Heart left ventricle (tissue), 16 donors: ENCODE measurements at regions of chr12 and their contacts with region 1.

Region 1: DNA sequence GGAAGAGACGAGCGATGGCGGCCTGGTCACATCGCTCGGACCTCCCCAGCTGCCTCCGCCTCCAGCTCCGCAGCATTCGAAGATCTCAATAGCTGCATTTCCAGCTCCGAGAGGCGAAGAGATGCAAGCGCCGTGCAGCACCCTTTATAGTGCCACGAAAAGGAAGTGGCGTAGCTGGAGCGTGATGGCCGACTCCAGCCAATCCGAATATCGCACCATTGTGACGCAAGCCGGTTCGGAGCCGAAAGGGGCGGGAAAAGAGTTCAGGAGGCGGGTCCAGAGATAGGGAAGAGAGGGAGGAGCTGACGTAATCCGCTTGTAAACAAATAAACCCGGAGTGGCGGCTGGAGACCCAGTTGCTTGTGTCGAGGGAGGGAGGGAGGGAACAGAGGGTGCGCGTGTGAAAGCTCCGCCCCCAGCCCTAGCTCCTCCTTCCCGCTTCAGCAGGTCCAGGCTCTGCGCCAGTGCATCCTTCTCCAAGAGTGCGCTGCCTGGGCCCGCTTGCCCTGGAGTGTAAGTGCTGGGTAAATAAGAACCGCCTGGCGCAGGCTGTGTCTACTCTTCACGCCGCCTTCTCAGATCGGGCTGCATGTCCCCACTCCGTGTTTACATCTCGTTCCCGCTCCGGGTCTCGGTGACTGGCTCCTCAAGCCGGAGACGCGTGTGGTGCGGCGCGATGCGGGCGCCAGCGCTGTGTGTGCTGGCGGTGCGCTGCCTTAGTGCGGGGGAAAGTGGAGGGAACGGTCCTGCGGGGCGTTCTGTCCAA is at the start of gene BTG1:
- DNase-seq: peak; percentile 98 to 99 (median 99)
- ATAC-seq: peak; percentile 89 to 93 (median 90)
- H3K4me3 ChIP-seq: peak within 1 kb of the TSS; percentile 76 to 96 (median 92)
- H3K27ac ChIP-seq: peak within 1 kb of the TSS; percentile 92 to 100 (median 98)
- H3K4me1 ChIP-seq: peaks cover 0 to 35% (median 4%) of the 10 kb centered on the region in 12 donors
- H3K27me3 ChIP-seq: no peaks in the 10 kb centered on the region
- CTCF ChIP-seq: peak in 1 of 12 donors; percentile 7
- POLR2A ChIP-seq: peak; percentile 95 to 99
- total RNA-seq, gene BTG1: 20.5 to 120 (median 58.3) TPM

Region 2: GRCh38 chr12:91577586-91578539 is 568.1 kb before region 1 on chr12:
- intact Hi-C with region 1: loop called in 6 of 10 experiments (anchors 2 to 10 kb)
- DNase-seq: no peak
- ATAC-seq: peak in 2 of 4 donors; percentile 45 to 50
- H3K4me3 ChIP-seq: peak overlapping the region in 9 of 12 donors; percentile 17 to 37 (median 26)
- H3K27ac ChIP-seq: peak overlapping the region in 3 of 12 donors; percentile 10 to 45 (median 35)
- H3K4me1 ChIP-seq: peaks cover 0 to 15% (median 7%) of the 10 kb centered on the region in 12 donors
- H3K27me3 ChIP-seq: no peaks in the 10 kb centered on the region
- CTCF ChIP-seq: peak; percentile 62 to 82 (median 72)
- POLR2A ChIP-seq: no peak

Region 3: GRCh38 chr12:91883781-91884180 is 262.1 kb before region 1 on chr12:
- intact Hi-C with region 1: loop called in 1 of 10 experiments (anchors 10 kb)
- DNase-seq: no peak
- ATAC-seq: no peak
- H3K4me3 ChIP-seq: no peak overlapping the region
- H3K27ac ChIP-seq: no peak overlapping the region
- H3K4me1 ChIP-seq: no peaks in the 10 kb centered on the region
- H3K27me3 ChIP-seq: no peaks in the 10 kb centered on the region
- CTCF ChIP-seq: no peak
- POLR2A ChIP-seq: no peak

Region 4: DNA sequence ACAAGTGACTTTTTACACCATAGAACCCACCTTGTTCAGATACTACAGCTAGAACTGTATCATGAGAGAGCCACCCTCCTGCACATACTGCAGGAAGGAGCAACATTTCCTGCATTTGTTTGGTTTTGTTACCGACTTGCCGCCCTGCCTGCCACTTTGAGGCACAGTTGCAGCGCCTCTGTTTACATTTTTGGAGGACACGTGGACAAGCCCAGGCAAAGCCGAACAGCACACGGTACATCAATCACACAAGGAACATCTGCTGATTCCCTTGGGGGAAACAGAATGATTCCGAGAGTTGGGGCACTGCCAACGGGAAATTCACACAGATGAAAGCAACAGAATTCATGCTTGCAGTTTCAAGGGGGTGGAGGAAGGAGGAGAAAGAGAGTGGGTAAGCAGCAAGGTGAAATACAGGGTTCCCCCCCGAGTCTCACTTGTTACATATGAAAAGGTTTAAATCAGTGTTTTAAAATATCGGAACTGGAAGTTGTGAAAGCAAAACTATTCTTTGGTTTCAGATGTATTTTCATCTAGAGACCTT is 111.0 kb before region 1 on chr12:
- intact Hi-C with region 1: loop called in 1 of 10 experiments (anchors 5 kb)
- DNase-seq: peak; percentile 28 to 62 (median 47)
- ATAC-seq: peak in 3 of 4 donors; percentile 42 to 69 (median 66)
- H3K4me3 ChIP-seq: peak overlapping the region in 8 of 12 donors; percentile 4 to 48 (median 30)
- H3K27ac ChIP-seq: peak overlapping the region in 8 of 12 donors; percentile 2 to 78 (median 24)
- H3K4me1 ChIP-seq: peaks cover 0 to 74% (median 23%) of the 10 kb centered on the region in 12 donors
- H3K27me3 ChIP-seq: no peaks in the 10 kb centered on the region
- CTCF ChIP-seq: no peak
- POLR2A ChIP-seq: no peak

Region 5: GRCh38 chr12:92244036-92244435 is 98.1 kb after region 1 on chr12:
- intact Hi-C with region 1: loop called in 6 of 10 experiments (anchors 1 to 10 kb)
- DNase-seq: peak in 2 of 5 donors; percentile 32 to 61
- ATAC-seq: peak; percentile 95 to 98 (median 96)
- H3K4me3 ChIP-seq: peak overlapping the region in 1 of 12 donors; percentile 23
- H3K27ac ChIP-seq: peak overlapping the region; percentile 48 to 78 (median 68)
- H3K4me1 ChIP-seq: peaks cover 5 to 25% (median 15%) of the 10 kb centered on the region in 12 donors
- H3K27me3 ChIP-seq: no peaks in the 10 kb centered on the region
- CTCF ChIP-seq: peak in 8 of 12 donors; percentile 22 to 54 (median 32)
- POLR2A ChIP-seq: no peak

Region 6: DNA sequence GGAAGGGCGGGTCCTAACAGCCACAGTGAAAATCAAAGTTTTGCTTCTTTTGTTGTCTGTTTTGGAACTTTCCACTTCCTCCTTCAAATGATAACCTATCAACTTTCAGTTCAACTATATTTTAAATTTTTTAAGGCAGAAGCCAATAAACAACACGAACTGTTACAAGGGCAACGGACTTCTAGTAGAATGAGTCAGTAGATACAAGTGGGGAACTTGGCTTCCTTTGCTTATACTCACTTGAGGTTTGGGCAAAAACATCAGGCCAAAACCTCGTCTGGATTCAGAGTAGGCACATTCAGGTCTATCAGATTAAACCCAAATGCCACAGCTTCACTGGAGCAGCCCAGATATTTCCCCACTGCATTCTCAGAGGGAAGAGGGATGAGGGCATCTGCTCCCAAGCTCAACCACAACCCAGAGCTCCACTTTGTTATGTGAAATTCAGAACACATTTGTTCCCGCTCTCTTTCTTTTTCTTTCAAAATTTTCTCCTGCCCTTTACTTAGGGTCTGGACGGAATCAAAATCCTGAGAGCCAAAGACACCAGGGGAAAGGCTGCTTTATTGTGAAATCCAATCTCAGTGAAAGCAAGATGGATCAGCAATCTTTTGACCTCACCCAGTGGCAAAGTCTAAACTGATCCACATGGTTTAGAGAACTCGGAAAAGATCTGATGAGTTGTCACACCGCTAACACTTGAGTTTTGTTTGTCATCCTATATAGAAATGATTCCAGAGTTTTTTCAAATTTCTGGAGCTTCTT is 152.2 kb after region 1 on chr12:
- intact Hi-C with region 1: no loop called
- DNase-seq: no peak
- ATAC-seq: peak; percentile 37 to 84 (median 68)
- H3K4me3 ChIP-seq: no peak overlapping the region
- H3K27ac ChIP-seq: peak overlapping the region in 11 of 12 donors; percentile 17 to 84 (median 47)
- H3K4me1 ChIP-seq: peaks cover 0 to 29% (median 3%) of the 10 kb centered on the region in 12 donors
- H3K27me3 ChIP-seq: no peaks in the 10 kb centered on the region
- CTCF ChIP-seq: no peak
- POLR2A ChIP-seq: no peak

Region 7: DNA sequence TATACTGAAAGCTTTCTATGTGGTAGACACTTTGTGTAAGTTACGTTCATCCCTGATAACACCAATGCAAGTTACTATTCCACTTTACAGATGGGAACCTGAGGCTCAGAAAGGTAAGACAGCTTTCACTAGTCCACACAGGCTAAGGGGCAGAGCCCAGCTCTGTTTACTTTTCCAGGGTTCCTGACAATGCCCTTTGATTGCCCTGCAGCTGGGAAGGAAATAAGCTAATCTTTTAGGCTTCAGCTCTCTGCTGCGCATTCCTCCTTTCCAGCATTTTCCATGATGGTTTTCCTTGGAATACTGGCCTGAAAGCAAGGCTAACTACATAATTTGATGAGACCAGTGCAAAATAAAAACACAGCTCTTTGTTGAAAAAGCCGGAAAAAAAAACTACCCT is 185.5 kb after region 1 on chr12:
- intact Hi-C with region 1: no loop called
- DNase-seq: no peak
- ATAC-seq: no peak
- H3K4me3 ChIP-seq: no peak overlapping the region
- H3K27ac ChIP-seq: no peak overlapping the region
- H3K4me1 ChIP-seq: peaks cover 0 to 12% (median 0%) of the 10 kb centered on the region in 12 donors
- H3K27me3 ChIP-seq: no peaks in the 10 kb centered on the region
- CTCF ChIP-seq: no peak
- POLR2A ChIP-seq: no peak

Region 8: DNA sequence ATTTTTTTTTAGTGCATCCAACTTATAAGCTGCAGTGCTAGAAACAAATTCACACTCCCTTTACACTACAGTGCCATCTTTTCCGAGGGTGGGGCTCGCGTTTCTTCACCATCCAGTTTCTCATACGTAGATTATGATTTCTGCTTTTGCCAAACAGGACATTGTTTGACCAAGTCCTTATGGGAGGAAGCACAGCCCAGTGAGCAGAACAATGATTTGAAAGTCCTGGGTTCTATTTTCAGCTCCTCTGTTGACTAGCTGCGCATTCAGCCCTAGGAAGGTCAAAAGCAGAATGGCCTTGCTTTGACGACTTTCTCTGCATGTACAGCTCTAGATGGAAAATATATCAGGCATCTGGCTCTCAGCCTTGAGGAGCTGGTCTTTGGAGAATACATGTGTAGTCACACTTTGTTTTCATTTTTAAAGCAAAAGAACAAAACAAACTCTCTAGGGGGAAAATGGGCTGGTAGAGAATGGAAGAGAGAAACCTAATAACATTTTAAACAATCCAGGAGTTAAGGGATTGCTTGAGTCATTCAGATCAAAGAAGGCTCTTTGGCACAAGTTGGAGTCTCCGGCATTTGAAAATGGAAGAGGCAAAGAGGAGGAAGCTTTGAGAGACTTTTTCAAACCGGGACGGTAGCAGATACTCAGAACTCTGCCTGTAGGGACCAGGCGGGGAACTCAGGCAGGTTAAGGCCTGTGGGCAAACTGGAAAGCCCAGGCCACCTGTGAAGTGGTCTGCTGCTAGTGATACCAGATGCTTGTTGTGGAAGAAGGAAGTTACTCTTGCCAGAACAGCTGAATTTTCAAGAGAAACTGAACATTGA is 299.6 kb after region 1 on chr12:
- intact Hi-C with region 1: loop called in 1 of 10 experiments (anchors 10 kb)
- DNase-seq: peak in 4 of 5 donors; percentile 34 to 57 (median 52)
- ATAC-seq: peak; percentile 80 to 94 (median 84)
- H3K4me3 ChIP-seq: no peak overlapping the region
- H3K27ac ChIP-seq: peak overlapping the region; percentile 53 to 89 (median 76)
- H3K4me1 ChIP-seq: peaks cover 0 to 44% (median 25%) of the 10 kb centered on the region in 12 donors
- H3K27me3 ChIP-seq: no peaks in the 10 kb centered on the region
- CTCF ChIP-seq: no peak
- POLR2A ChIP-seq: no peak

Region 9: DNA sequence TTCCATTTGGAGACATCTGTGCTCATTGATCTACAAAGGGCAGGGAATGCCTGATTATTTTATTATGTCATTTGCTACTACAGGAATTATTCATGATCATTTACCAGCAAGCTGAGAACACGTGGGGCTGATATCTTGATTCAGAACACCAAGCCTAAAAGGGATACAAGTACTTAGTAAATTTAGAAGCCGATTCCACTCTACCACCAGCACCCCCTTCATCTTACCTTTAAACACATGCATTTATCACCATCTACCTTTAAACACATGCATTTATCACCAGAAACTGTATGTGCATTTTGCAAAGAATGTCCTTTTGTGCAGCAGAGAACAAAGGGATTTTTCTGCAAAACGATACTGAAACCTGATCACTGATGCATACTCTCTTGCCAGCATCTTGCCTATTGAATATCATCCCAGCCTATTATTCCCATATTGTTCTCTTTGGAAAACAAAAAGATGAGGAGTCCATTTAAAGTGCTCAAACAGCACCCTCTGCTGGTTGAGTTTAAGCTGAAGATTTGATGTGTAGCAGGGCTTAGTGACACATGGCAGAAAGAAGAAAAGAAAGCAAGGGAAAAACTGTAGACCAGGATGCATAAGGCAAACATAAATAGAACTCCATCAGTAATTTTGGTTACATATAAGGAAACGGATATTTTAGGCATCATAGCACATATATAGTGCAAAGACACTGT is 424.3 kb after region 1 on chr12:
- intact Hi-C with region 1: loop called in 9 of 10 experiments (anchors 2 to 10 kb)
- DNase-seq: peak in 3 of 5 donors; percentile 48 to 71 (median 71)
- ATAC-seq: peak; percentile 47 to 89 (median 86)
- H3K4me3 ChIP-seq: no peak overlapping the region
- H3K27ac ChIP-seq: peak overlapping the region in 1 of 12 donors; percentile 59
- H3K4me1 ChIP-seq: peaks cover 0 to 47% (median 4%) of the 10 kb centered on the region in 12 donors
- H3K27me3 ChIP-seq: no peaks in the 10 kb centered on the region
- CTCF ChIP-seq: peak; percentile 71 to 93 (median 80)
- POLR2A ChIP-seq: no peak